Endothelial cell of umbilical vein (primary cell): ENCODE measurements at regions of chr15 and their contacts with region 1.

Region 1: DNA sequence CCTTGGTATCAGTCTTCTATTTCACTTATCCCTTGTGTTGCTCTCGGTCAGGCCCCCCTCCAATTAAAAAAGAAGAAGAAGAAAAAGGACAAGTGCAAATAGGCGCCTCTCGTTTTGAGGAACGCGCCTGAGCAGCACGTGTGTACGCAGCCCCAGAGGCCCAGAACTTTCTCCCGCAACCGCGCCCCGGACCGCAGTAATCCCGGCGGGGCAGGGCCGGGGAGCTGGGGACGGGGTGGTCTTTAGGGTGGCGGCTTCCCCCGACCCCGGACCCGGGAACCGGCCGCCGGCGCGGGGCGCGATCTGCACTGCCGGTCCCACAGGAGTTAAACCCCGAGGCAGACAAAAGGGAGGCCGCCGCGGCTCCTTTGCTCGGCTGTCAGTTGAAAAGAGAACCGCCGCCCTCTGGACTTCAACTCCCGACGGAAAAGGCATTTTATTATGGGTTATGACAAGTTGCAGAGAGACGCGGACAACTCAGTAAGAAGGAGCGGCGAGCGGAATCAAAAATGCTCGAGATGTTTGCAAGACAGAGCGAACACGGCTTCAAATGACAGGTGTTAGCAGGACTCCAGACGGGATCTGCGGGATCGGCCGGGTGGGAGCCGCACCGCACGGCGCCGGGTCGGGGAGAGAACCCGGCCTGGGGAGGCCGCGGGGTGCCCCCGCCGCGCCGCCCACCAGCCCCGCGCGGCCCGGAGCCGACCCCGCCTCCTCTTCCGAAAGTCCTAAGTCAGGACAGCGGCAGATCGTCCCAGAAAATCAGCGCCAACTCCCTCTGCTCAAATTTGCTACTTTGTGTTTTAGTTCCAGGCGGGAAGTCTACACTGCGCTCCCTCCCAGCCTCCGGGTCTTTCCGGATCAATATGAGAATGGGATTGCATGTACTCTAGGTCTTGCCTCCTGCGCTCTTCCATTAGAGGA is 79.0 kb downstream of the NR2F2 start:
- DNase-seq: peak; percentile 26
- H3K4me3 ChIP-seq: peak overlapping the region; percentile 12 to 49 (median 49)
- H3K27ac ChIP-seq: no peak overlapping the region
- H3K4me1 ChIP-seq: peaks cover 8% of the 10 kb centered on the region
- H3K27me3 ChIP-seq: peaks cover 25 to 49% of the 10 kb centered on the region in 2 experiments
- CTCF ChIP-seq: no peak
- POLR2A ChIP-seq: no peak

Region 2: DNA sequence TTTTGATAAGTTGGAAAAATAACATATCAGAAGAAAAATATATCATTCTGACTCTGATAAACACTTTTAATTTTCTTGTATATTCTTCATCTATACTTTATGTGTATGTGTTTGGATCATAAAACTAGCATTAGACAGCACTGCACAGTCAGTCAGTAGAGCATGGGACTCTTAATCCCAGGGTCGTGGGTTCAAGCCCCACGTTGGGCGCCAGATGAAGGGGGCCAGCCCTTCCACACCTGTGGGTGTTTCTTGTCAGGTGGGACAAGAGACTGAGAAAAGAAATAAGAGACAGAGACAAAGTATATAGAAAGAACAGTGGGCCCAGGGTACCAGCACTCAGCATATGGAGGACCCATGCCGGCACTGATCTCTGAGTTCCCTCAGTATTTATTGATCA is 625.0 kb before region 1 on chr15:
- CTCF ChIA-PET with region 1: no interaction called
- POLR2A ChIA-PET with region 1: no interaction called
- dilution Hi-C with region 1: no loop called
- intact Hi-C with region 1: no loop called
- DNase-seq: no peak
- H3K4me3 ChIP-seq: no peak overlapping the region
- H3K27ac ChIP-seq: no peak overlapping the region
- H3K4me1 ChIP-seq: no peaks in the 10 kb centered on the region
- H3K27me3 ChIP-seq: no peaks in the 10 kb centered on the region
- CTCF ChIP-seq: no peak
- POLR2A ChIP-seq: no peak

Region 3: DNA sequence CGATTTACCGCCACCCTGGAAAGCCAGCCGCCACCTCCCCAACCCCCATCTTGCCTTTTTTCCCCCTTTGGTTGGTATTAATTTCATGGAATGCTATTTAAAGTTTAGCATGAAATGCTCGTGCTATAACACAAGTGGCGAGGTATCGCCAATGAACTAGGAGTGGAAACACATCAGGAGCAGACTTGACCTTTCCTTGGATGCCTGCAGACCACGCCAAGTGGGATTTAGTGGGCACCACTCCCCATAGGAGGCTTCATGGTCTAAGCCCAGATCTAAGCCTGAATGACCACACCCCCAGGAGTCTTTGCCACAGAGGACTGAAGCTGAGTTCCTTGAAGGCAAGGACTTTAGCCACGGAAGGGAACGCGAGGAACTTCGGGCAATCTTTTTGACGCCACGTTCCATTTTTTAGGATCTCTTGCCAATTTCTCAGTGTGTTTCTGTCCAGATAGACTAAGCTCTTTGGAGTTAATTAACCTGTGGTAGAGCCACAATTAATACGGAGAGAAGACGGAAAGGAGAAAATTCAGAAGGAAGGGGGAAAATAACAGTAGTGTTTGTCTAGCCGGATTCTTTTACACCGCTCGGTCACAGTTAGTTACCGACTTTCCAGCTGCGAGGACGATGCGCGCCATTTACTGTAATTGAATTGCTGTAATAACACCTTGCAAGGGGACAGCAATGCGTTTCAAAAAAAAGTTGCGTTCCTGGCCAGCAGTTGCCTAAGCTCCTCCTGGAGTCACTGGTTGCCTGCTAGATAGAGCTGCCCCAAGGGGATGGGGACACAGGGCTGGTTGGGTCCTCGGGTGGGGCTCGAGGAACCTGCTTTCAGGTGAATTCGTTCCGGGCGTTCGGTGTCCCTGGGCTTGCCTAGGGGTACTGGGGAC is 41.9 kb before region 1 on chr15:
- CTCF ChIA-PET with region 1: no interaction called
- POLR2A ChIA-PET with region 1: no interaction called
- dilution Hi-C with region 1: no loop called
- intact Hi-C with region 1: loop called (anchors 2 kb)
- DNase-seq: peak; percentile 30
- H3K4me3 ChIP-seq: peak overlapping the region; percentile 15 to 57 (median 21)
- H3K27ac ChIP-seq: no peak overlapping the region
- H3K4me1 ChIP-seq: peaks cover 7% of the 10 kb centered on the region
- H3K27me3 ChIP-seq: no peaks in the 10 kb centered on the region
- CTCF ChIP-seq: no peak
- POLR2A ChIP-seq: no peak

Region 4: GRCh38 chr15:96428742-96429141 is 19.3 kb after region 1 on chr15:
- CTCF ChIA-PET with region 1: no interaction called
- POLR2A ChIA-PET with region 1: no interaction called
- dilution Hi-C with region 1: no loop called
- intact Hi-C with region 1: loop called (anchors 2 kb)
- DNase-seq: peak; percentile 58
- H3K4me3 ChIP-seq: no peak overlapping the region
- H3K27ac ChIP-seq: peak overlapping the region; percentile 28
- H3K4me1 ChIP-seq: peaks cover 17% of the 10 kb centered on the region
- H3K27me3 ChIP-seq: no peaks in the 10 kb centered on the region
- CTCF ChIP-seq: no peak
- POLR2A ChIP-seq: no peak